ENCODE measurements at regions of chr2 and their contacts with region 1.

Region 1: DNA sequence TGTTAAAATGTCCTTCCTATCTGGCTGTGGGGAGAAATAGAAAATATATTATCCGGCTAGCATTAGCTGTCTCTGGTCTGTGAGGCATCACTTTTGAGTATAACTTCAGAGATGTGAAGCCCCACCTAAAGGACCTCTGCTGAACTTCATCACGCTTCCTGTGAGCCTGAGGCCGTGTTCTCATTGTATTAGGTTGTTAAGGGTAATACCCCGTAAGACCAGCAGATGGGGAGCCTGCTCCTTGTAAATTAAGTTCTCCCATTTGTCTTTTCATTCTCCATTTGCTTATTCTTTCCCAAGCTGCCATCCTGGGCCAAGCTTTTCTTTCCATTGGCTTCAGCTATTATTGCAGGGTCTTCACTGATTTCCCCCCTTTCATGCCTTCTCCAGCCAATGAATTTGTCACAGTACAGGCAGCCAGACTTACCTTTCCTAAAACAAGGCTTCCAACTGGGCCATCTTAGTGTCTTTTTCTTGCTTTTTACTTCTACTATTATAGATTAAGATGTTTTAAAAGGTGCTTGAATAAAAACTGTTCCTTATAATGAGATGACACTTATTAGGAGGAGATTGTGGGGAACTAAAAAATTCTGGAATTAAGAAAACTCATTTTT is 12.4 kb downstream of the NIF3L1 start:
- DNase-seq: peak; percentile 75 to 79 (median 76)
- H3K4me3 ChIP-seq: no peak overlapping the region
- H3K4me3 Mint-ChIP-seq: no peak overlapping the region
- H3K27ac ChIP-seq: no peak overlapping the region
- H3K27ac Mint-ChIP-seq: peak overlapping the region in 5 of 7 donors; percentile 7 to 88 (median 47)
- H3K4me1 ChIP-seq: peaks cover 8 to 11% of the 10 kb centered on the region in 2 donors
- H3K4me1 Mint-ChIP-seq: peaks cover 13% of the 10 kb centered on the region
- H3K27me3 ChIP-seq: no peaks in the 10 kb centered on the region
- H3K27me3 Mint-ChIP-seq: no peaks in the 10 kb centered on the region
- CTCF ChIP-seq: peak; percentile 88

Region 2: GRCh38 chr2:201064797-201065329 is 163.3 kb after region 1 on chr2:
- intact Hi-C with region 1: loop called (anchors 5 to 10 kb)
- DNase-seq: no peak
- H3K4me3 ChIP-seq: no peak overlapping the region
- H3K4me3 Mint-ChIP-seq: no peak overlapping the region
- H3K27ac ChIP-seq: no peak overlapping the region
- H3K27ac Mint-ChIP-seq: peak overlapping the region in 1 of 7 donors; percentile 20
- H3K4me1 ChIP-seq: peaks cover 9 to 28% of the 10 kb centered on the region in 2 donors
- H3K4me1 Mint-ChIP-seq: peaks cover 40% of the 10 kb centered on the region
- H3K27me3 ChIP-seq: no peaks in the 10 kb centered on the region
- H3K27me3 Mint-ChIP-seq: peaks cover 0 to 3% (median 2%) of the 10 kb centered on the region in 3 donors
- CTCF ChIP-seq: no peak

Region 3: DNA sequence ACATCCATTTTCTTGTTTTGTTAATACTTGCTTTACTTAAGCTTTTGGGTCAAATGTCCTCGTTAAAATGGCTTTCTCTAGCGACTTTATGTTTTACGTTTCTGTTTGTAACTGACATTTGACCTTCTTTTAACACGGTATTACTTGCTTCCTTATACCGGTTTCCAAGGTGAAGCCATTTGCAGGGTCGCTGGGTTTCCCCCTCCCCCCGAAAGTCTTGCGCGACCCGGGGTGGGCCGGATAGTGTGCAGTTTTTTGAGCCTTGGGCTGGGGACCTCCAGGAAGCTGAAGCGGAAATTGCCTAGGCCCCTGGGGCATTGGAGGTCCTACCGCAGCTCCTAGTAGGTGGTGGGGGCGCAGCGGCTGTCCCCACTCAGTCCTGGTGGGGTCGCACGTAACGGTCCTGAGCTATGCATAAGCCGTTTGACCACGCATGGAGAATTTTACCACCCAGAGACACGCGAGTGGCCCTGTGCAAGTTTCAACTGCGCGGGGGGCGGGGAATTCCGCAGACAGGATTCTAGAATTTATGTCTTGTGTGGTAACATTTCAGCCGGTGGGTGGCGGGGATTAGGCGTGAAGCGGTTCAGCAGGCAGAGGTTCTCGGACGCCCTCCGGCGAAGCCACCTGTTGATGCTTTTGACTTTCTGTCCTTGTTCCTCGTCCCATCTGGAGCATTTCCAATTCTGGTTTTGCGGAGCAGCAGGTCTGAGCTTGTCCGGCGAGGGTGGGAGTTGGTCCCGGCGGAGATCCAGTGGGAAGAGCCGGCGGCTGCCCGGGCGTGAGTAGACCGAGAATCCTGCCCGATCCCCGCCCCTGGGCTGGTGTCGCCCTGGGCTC is 216.8 kb after region 1 on chr2:
- intact Hi-C with region 1: no loop called
- DNase-seq: peak; percentile 67 to 88 (median 68)
- H3K4me3 ChIP-seq: peak overlapping the region; percentile 77 to 99 (median 83)
- H3K4me3 Mint-ChIP-seq: peak overlapping the region; percentile 97 to 99
- H3K27ac ChIP-seq: peak overlapping the region; percentile 96 to 99
- H3K27ac Mint-ChIP-seq: peak overlapping the region; percentile 93 to 99 (median 99)
- H3K4me1 ChIP-seq: peaks cover 40 to 63% of the 10 kb centered on the region in 2 donors
- H3K4me1 Mint-ChIP-seq: peaks cover 43% of the 10 kb centered on the region
- H3K27me3 ChIP-seq: no peaks in the 10 kb centered on the region
- H3K27me3 Mint-ChIP-seq: peaks cover 0 to 4% (median 1%) of the 10 kb centered on the region in 3 donors
- CTCF ChIP-seq: peak; percentile 35

Region 4: DNA sequence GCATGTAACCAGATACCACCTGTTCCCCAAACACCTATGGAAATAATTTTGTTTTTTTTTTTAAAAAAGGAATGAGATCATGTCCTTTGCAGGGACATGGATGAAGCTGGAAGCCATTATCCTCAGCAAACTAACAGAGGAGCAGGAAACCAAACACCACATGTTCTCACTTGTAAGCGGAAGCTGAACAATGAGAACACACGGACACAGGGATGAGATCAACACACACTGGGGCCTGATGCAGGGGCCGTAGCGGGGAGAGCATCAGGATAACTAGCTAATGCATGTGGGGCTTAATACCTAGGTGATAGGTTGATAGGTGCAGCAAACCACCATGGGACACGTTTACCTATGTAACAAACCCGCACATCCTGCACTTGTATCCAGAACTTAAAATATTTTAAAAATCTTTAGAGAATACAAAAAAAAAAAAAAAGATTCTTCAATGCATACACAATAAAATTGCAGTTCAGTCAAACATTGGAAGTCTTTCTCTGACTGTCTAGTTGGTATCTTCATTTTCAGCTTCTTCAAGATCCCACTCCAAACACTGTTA is 269.8 kb after region 1 on chr2:
- intact Hi-C with region 1: loop called (anchors 5 kb)
- DNase-seq: no peak
- H3K4me3 ChIP-seq: no peak overlapping the region
- H3K4me3 Mint-ChIP-seq: no peak overlapping the region
- H3K27ac ChIP-seq: no peak overlapping the region
- H3K27ac Mint-ChIP-seq: peak overlapping the region in 2 of 7 donors; percentile 49 to 65
- H3K4me1 ChIP-seq: peaks cover 3 to 15% of the 10 kb centered on the region in 2 donors
- H3K4me1 Mint-ChIP-seq: peaks cover 31% of the 10 kb centered on the region
- H3K27me3 ChIP-seq: no peaks in the 10 kb centered on the region
- H3K27me3 Mint-ChIP-seq: peaks cover 0 to 3% (median 0%) of the 10 kb centered on the region in 3 donors
- CTCF ChIP-seq: no peak